ENCODE measurements at regions of chr9 and their contacts with region 1.

Region 1: DNA sequence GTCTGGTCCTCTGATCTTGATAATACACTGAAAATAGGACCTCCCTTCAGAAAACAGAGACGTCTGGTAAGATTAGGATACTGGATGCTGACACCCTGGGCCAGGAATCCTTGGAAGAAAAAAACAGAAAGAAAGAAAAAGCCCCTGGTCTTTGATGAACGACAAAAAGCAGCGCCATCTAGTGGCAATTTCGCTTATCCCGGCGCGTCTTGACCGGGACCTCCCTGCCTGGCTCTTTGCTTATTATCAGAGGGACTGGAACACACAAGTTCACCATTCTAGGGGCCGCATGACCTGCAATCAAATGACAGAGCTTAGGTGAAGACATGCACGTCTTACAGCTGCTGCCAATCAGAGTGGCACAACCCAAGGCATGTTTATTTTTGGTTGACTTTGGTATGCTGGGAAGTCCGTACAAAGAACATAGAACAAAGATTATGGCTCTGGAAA is 114.9 kb upstream of the NFIB start:
- DNase-seq: peak; percentile 67 to 80 (median 74)
- ATAC-seq: peak; percentile 69 to 80 (median 76)
- H3K4me3 ChIP-seq: no peak overlapping the region
- H3K27ac ChIP-seq: peak overlapping the region in 7 of 12 donors; percentile 23 to 54 (median 37)
- H3K4me1 ChIP-seq: peaks cover 0 to 40% (median 17%) of the 10 kb centered on the region in 12 donors
- H3K27me3 ChIP-seq: no peaks in the 10 kb centered on the region
- CTCF ChIP-seq: peak; percentile 69 to 86 (median 80)
- POLR2A ChIP-seq: no peak

Region 2: GRCh38 chr9:13213337-13213736 is 1215.5 kb before region 1 on chr9:
- intact Hi-C with region 1: loop called in 3 of 10 experiments (anchors 5 to 10 kb)
- DNase-seq: no peak
- ATAC-seq: no peak
- H3K4me3 ChIP-seq: no peak overlapping the region
- H3K27ac ChIP-seq: no peak overlapping the region
- H3K4me1 ChIP-seq: peaks cover 0 to 23% (median 8%) of the 10 kb centered on the region in 12 donors
- H3K27me3 ChIP-seq: no peaks in the 10 kb centered on the region
- CTCF ChIP-seq: peak in 10 of 12 donors; percentile 15 to 54 (median 38)
- POLR2A ChIP-seq: no peak

Region 3: DNA sequence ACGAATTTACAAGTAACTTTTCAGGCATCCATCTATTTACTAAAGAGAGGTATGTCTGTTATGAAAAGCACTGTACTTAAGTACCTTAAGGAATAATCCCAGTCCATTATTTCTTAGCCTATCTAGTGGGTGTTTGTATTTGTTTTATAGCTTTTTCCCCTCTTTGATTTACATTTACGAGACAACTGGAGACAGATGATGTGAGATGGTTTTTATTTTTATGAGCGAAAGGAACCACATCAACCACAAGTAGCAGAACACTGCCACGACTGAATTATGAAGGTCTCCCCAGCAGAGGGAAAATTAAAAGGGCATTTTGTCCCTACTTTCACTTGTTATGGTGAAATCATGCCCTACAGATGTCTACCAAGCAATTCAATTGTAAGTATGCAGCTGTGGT is 472.7 kb before region 1 on chr9:
- intact Hi-C with region 1: no loop called
- DNase-seq: no peak
- ATAC-seq: no peak
- H3K4me3 ChIP-seq: no peak overlapping the region
- H3K27ac ChIP-seq: no peak overlapping the region
- H3K4me1 ChIP-seq: peaks cover 0 to 21% (median 2%) of the 10 kb centered on the region in 12 donors
- H3K27me3 ChIP-seq: no peaks in the 10 kb centered on the region
- CTCF ChIP-seq: no peak
- POLR2A ChIP-seq: no peak

Region 4: DNA sequence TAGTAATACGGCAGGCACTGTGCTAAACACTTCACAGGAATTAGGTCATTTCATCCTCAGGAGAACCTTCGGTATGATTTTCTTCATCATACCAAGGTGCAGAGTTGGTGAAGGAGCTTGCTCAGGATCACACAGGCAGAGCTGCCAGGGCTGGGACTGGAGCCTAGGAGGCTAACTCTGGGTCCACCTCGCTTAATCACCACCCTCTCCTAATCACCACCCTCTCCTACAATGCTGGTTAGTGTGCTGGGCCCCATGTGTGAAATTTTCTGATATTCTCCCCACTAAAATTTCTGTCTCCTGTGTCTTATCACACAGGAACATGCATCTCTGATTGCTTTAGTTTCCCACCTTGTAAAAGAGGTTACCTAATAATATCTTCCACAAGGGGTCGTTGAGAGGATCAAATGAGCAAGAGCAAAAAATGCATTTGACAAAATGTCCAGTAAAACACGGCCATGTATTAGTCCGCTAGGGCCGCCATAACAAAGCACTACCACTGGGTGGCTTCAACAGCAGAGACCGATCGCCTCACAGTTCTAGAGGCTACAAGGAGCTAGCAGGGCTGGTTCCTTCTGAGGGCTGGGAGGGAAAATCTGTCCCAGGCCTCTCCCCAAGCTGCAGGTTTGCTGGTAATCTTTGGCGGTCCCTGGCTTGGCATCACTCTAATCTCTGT is 13.3 kb after region 1 on chr9:
- intact Hi-C with region 1: no loop called
- DNase-seq: no peak
- ATAC-seq: no peak
- H3K4me3 ChIP-seq: no peak overlapping the region
- H3K27ac ChIP-seq: no peak overlapping the region
- H3K4me1 ChIP-seq: peaks cover 0 to 13% (median 0%) of the 10 kb centered on the region in 12 donors
- H3K27me3 ChIP-seq: no peaks in the 10 kb centered on the region
- CTCF ChIP-seq: peak in 2 of 12 donors; percentile 4 to 17
- POLR2A ChIP-seq: no peak

Measured in heart left ventricle (tissue), 16 donors.